CD4-positive, alpha-beta memory T cell (primary cell): ENCODE measurements at regions of chr5 and their contacts with region 1.

Region 1: DNA sequence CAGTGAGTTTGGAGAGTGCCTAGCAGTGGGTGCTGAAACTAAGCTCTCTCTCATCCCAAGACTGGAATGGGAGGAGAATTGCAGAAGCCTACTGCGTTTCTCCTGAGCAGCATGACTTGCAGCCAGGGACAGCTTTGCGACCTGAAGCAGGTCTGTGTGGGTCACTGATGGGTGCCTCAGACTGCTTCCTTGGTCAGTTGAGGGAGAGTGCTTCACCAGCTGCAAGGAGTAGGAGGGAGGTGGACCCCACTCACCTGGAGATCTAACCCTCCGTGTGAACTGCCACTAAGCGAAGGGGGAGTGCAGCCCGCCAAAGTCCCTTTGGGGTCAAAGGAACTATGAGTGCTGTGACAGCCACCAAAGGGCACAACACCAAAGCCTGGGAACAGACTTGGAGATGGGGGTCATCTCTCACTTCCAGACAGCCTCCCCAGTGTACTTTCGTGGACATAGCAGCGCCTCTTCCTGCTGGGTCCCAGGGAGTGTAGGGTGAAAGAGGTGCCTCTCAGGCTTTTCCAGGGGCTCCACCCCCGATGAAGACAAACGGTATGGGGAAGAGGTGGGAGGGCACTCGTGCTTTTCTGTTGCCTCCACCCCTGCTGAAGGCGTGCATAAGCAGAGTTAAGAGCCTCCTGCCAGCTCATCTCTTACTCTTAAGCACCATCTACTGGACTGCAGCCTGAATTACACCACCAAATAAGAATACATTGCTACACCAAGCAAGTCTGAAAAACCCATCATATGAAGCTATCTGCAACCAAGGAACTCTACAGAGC is 34.3 kb upstream of the MACIR start:
- DNase-seq: peak; percentile 41 to 56 (median 50)
- H3K4me3 ChIP-seq: no peak overlapping the region
- H3K4me3 Mint-ChIP-seq: no peak overlapping the region
- H3K27ac ChIP-seq: no peak overlapping the region
- H3K27ac Mint-ChIP-seq: no peak overlapping the region
- H3K4me1 ChIP-seq: no peaks in the 10 kb centered on the region
- H3K4me1 Mint-ChIP-seq: no peaks in the 10 kb centered on the region
- H3K27me3 ChIP-seq: no peaks in the 10 kb centered on the region
- H3K27me3 Mint-ChIP-seq: peaks cover 18 to 27% of the 10 kb centered on the region in 2 donors

Region 2: DNA sequence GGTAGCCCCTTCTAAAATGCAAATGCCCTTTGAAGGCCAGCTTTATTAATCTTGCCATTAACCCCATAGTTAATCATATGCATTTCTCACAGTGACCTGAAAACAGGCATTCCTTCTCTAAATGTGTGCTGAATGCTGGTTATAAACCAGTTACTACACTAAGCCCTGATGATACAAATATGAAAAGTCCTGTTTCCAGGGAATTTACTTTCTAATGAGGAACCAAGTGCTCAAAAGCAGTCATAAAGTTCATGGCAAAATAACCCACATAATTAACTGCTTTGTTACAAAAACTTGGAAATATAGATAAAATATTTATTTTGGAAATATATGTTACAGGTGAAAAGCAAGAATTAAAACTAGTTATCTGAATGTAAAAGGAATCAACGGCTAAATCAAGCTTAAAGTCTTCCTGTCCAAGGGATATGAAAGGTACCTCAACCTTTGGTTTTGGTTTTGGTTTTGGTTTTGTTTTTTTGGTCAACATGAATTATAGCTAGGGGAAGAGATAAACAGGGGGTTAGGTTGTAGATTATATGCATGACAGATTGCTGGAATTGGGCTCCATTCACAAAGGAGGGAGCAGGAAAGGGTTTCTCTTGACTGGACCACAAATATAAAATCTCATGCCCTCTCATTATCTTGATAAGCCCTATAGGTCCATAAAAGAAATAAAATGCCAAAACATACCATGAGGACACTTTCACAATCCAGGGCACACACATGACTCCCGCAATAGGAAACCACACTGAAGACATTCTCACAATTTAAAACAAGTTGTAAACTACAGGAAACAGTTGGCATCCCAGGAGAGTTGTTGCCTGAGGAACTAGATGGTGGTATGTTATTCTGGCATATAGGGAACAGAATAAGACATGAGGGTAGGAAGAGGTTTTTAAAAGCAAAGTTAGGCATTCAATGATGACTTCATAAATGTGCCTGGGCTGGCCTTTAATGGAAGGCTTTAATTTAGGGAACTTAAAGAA is 12.4 kb before region 1 on chr5:
- CTCF ChIA-PET with region 1: interaction called, 35 read pairs
- POLR2A ChIA-PET with region 1: no interaction called
- intact Hi-C with region 1: no loop called
- DNase-seq: peak in 3 of 5 donors; percentile 9 to 11 (median 9)
- H3K4me3 ChIP-seq: no peak overlapping the region
- H3K4me3 Mint-ChIP-seq: peak overlapping the region in 7 of 8 donors; percentile 30 to 77 (median 52)
- H3K27ac ChIP-seq: no peak overlapping the region
- H3K27ac Mint-ChIP-seq: peak overlapping the region in 5 of 7 donors; percentile 9 to 69 (median 26)
- H3K4me1 ChIP-seq: peaks cover 15% of the 10 kb centered on the region
- H3K4me1 Mint-ChIP-seq: peaks cover 17 to 21% (median 20%) of the 10 kb centered on the region in 4 donors
- H3K27me3 ChIP-seq: no peaks in the 10 kb centered on the region
- H3K27me3 Mint-ChIP-seq: no peaks in the 10 kb centered on the region